ENCODE measurements at regions of chr20 and their contacts with region 1.

Region 1: DNA sequence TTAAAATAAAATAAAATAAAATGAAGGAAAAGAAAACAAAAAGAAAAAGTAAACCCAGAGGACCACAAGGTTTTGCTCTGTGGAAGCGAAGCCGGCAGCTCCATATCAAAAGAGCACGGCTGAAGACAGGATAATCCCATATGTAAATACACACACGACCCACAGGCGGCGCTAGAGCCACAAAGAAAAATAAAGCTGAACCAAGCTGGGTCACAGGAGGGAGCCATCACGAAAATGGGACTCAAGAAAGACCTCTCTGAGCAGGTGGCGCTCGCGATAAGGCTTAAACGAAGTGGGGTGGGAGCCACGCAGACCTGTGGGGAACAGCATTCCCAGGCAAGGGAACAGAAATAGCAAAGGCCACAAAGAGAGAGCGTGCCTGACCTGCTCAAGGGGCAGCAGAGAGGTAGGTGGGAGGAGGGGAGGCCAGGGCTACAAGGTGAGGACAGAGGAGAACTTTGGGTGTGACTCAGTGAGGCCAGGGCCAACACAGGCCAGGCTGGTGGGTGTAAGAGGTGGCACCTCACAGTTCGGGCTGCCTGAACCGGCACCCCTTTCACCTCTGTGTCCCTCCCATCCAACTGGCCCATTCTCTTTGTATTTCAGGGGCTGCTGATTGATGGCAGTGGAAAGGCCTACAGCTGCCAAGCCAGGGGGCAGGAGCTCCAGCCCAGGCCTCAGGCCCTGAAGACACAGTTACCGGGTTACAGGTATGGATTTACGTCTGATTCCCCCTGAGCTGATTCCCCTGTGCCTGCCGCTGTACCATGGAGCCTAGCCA is 26.0 kb downstream of the PTGIS start:
- DNase-seq: peak; percentile 65
- H3K4me3 Mint-ChIP-seq: no peak overlapping the region
- H3K27ac Mint-ChIP-seq: peak overlapping the region; percentile 95
- H3K4me1 Mint-ChIP-seq: peaks cover 33% of the 10 kb centered on the region
- H3K27me3 Mint-ChIP-seq: no peaks in the 10 kb centered on the region

Region 2: GRCh38 chr20:49245921-49246740 is 295.8 kb before region 1 on chr20:
- intact Hi-C with region 1: no loop called
- DNase-seq: no peak
- H3K4me3 Mint-ChIP-seq: no peak overlapping the region
- H3K27ac Mint-ChIP-seq: peak overlapping the region; percentile 7
- H3K4me1 Mint-ChIP-seq: peaks cover 8% of the 10 kb centered on the region
- H3K27me3 Mint-ChIP-seq: no peaks in the 10 kb centered on the region

Region 3: GRCh38 chr20:49603209-49603627 is 61.3 kb after region 1 on chr20:
- intact Hi-C with region 1: loop called (anchors 1 kb)
- DNase-seq: no peak
- H3K4me3 Mint-ChIP-seq: no peak overlapping the region
- H3K27ac Mint-ChIP-seq: peak overlapping the region; percentile 52
- H3K4me1 Mint-ChIP-seq: peaks cover 36% of the 10 kb centered on the region
- H3K27me3 Mint-ChIP-seq: no peaks in the 10 kb centered on the region

Region 4: DNA sequence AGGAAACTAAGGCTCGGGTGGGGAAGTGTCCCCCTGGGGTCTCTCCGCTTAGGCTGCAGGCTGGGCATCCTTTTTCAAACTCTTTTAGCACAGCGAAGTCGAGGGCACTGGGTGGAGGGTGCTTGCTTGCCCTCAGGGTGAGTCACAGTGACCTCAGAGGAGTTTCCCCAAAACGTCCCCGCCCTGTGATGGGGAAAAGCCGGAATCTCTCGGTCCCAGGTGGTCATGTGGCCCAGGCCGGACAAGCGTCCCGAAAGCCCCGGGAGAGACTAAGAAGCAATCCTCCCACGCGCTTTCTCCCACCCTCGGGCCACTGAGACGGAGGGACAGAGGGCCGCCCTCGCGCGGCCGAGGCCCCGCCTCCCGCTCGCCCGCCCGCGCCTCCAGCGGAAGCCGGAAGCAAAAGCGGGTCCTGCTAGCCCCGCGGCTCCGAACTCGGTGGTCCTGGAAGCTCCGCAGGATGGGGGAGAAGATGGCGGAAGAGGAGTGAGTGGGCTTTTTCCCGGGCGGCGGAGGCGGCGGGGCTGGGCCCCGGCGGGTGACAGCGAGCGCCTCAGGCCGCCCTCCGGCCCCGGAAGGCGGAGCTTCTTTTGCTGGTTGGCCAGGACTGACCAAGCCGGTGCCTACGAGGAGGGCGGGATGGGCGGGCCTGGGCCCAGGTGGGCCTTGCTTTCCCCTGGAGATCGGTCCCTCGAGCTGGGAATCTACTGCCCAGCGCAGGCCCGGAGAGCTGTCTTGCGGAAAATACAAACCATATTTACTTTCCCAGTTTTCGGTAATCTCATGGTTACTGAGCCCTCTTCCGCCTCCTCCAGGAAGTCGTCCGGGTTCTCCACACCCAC is 270.8 kb after region 1 on chr20 and contains the start of gene SLC9A8:
- intact Hi-C with region 1: loop called (anchors 5 kb)
- DNase-seq: peak; percentile 75
- H3K4me3 Mint-ChIP-seq: peak within 1 kb of the TSS; percentile 92
- H3K27ac Mint-ChIP-seq: peak within 1 kb of the TSS; percentile 94
- H3K4me1 Mint-ChIP-seq: peaks cover 43% of the 10 kb centered on the region
- H3K27me3 Mint-ChIP-seq: no peaks in the 10 kb centered on the region
- total RNA-seq, gene SLC9A8: 16.4 and 18.7 TPM in 2 replicates

Region 5: DNA sequence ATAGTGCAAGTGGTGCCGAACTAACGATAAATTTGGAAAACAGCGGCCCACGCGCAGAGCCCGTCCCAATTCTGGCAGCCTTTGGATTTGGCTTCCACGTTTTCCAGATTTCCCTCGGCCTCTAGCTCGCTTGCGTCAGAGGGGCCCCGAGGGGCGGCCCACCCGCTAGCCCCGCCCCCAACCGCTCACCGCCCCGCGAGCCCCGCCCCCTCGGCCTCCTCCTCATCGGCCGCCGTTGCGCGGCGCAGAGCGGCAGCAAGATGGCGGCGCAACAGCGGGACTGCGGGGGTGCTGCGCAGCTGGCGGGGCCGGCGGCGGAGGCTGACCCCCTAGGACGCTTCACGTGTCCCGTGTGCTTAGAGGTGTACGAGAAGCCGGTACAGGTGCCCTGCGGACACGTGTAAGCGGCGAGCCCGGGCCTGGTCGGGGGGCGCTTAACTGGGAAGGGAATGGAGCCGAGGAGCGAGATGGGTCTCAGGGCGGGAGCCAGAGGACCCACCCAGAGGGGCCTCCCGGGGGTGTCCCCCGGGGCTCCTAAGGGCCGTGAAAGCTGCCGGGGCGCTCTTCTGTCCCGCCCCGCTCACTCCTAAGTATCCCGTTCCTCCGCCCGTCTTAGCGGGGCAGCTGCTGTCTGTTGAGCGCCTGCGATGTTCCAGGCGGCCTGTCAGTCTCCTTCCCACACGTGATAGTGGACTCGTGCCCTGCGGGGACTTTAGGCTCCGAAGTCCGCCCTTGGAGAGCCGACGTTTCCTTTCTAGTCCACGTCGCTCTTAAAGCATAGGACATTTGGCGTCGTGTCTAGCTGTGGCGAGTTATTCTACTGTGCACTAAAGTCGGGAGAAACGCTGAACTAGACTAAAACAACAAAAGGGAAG is 394.5 kb after region 1 on chr20 and contains the start of gene RNF114:
- intact Hi-C with region 1: loop called (anchors 5 kb)
- DNase-seq: peak; percentile 78
- H3K4me3 Mint-ChIP-seq: peak within 1 kb of the TSS; percentile 90
- H3K27ac Mint-ChIP-seq: peak within 1 kb of the TSS; percentile 67
- H3K4me1 Mint-ChIP-seq: peaks cover 36% of the 10 kb centered on the region
- H3K27me3 Mint-ChIP-seq: no peaks in the 10 kb centered on the region
- total RNA-seq, gene RNF114: 64.0 and 67.6 TPM in 2 replicates